Dorsolateral prefrontal cortex (tissue), 120 donors: ENCODE measurements at regions of chr16 and their contacts with region 1.

Region 1: DNA sequence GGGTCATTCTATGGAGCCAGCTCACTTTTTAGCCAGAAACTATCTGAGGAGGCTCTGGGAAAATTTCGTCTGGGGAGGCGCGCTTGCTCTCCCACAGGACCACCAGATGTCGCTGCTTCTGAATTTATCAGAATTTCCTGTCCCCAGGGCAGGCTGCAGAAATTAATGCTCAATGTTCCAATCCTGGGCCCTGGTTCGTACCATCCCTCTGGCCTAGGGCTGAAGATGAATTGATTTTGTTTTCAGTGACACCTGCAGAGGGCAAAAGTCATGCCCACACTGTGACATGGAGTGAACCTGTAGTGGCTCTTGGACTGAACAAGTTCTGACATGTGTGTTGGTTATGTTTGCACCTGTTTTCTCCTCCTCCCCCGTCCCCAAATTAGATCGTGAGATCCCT is 482.6 kb downstream of the NPIPA7 start:
- DNase-seq: peak in 9 of 10 donors; percentile 19 to 73 (median 54)
- H3K4me3 ChIP-seq: no peak overlapping the region
- H3K27ac ChIP-seq: no peak overlapping the region
- H3K27me3 ChIP-seq: peaks cover 0 to 5% (median 0%) of the 10 kb centered on the region in 45 donors
- CTCF ChIP-seq: peak; percentile 69 to 94 (median 84)

Region 2: DNA sequence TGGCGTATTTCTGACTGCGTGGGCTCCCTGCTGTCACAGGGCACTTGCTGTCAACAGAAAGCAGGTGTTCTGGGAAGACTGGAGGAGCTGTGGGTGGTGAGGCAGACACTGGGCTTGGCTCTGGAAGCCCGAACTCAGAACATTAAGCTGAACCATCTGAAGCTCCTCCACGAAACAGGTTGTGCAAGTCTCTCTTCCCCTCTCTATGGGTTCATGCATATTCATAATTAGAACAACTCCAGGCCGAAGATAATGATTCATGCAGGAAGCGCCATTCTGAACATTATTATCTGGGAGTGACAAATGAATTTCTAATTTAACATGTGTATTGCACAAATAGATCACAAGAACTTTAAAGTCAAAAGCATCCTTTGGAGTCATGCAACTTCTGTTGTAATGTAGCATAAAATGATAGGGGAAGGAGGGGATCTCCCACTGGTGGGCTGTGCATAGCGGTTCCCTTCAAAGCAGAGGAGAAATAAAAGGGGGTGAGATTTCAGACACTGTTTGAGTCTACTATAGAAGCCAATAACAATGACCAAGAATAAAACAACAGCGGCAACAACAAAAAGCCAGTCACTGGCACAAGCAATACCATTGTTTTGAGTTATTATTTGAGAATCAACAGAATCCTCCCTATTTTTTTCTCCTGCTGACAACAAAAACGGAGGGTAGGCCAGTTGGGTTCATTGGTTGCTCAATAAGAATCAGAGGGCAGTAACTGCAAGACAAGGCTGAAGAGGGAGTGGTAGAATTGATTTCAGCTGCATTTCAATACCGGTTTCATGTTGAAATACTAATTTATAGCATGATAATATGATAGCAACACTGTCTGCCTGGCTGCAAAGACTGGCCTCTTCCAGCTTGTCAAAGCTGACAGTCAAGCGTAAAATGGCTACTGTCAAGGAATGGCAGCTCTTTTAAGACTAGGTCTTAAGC is 201.9 kb after region 1 on chr16:
- intact Hi-C with region 1: loop called in 1 of 2 experiments (anchors 10 kb)
- DNase-seq: peak in 3 of 10 donors; percentile 41 to 46 (median 45)
- H3K4me3 ChIP-seq: no peak overlapping the region
- H3K27ac ChIP-seq: peak overlapping the region in 50 of 59 donors; percentile 1 to 81 (median 46)
- H3K27me3 ChIP-seq: peaks cover 0 to 5% (median 0%) of the 10 kb centered on the region in 45 donors
- CTCF ChIP-seq: no peak

Region 3: DNA sequence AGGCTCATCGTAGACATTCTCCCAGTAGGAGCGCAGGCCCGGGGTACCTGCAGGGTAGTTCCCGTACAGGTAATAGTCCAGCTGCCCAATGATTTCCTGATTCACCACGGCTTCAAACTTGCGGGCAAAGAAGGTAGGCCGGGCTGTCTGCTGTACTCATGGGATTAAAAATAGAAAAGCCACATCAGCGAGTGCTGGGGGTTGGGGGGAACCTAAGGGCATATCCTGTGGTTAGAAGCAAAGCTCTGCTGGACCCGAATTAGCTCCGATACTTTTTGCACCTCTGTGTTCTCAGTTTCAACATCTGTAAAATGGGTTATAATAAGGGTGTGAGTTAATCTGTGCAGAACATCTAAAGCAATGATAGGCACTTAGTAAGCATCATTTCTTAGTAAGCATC is 273.0 kb after region 1 on chr16:
- intact Hi-C with region 1: loop called in 1 of 2 experiments (anchors 10 kb)
- DNase-seq: no peak
- H3K4me3 ChIP-seq: no peak overlapping the region
- H3K27ac ChIP-seq: no peak overlapping the region
- H3K27me3 ChIP-seq: no peaks in the 10 kb centered on the region
- CTCF ChIP-seq: no peak

Region 4: DNA sequence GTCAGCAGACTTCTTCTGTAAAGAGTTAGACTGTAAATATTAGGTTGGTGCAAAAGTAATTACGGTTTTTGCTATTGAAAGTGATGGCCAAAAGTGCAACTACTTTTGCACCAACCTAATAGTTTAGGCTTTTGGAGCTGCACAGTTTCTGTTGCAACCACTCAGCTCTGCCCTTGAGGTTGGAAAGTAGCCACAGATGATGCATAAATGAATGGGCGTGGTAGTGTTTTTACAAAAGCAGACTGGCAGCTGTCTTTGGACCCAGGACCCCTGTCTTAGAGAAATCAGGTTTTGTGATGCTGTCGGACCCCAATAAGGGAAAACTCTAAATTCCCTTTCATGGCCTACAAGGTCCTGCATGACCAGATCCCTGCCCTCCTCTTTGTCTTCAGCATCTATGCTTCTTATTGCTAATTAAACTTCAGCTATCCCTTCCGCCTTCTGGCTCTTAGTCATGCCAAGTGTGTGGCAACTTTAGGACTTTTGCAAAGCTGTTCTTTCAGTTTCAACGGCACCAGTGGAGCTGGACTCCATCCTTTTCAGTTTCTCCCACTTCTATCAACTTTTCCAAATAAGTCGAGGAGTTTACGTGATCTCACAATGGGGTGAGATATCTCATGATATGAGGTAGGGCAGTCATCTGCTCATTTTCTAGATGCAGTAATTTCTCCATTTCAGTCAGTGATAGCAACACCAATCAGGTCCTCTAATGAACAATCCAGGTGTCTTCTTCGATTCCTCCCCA is 376.9 kb after region 1 on chr16:
- intact Hi-C with region 1: loop called (anchors 5 to 10 kb)
- DNase-seq: no peak
- H3K4me3 ChIP-seq: no peak overlapping the region
- H3K27ac ChIP-seq: no peak overlapping the region
- H3K27me3 ChIP-seq: no peaks in the 10 kb centered on the region
- CTCF ChIP-seq: no peak

Region 5: DNA sequence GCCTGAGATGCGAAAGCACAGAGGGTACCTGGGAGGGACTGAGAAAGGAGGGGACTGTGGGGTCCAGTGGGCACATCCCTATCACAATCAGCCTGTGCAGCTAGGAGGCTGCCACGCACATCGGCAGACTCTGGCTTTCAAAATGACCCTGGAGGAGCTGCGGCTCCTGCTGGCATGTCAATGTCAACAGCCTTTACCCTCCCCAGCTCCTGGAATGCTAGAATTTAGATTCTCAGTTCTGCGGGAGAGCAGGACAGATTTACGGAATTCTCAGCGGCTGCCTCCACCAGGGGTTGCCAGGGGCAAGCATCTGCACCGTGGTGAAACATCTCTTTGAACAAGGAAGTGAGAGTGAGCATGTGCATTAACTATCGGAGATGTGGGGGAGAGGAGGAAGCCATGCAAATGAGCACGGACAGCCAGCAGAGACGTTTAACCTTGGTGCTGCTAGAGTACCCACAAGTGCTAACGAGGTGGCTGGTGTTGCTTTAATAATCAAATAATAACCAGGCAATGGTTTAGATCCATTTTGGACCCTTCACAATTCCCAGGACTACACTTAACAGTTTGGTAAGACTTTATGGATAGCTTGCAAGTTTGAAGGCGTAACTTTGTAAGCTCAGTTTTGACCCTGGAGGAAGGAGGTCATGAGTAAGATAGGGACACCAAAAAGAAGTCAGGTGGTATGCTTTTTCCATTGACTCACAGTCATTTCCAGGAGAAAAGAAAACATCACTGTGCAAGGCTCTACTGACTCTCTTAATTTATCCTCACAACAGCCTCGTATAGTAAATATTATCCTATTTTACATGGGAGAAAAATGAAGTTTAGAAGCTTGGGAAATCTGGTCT is 555.1 kb after region 1 on chr16:
- intact Hi-C with region 1: loop called in 1 of 2 experiments (anchors 10 kb)
- DNase-seq: peak in 3 of 10 donors; percentile 20 to 45 (median 43)
- H3K4me3 ChIP-seq: peak overlapping the region in 43 of 59 donors; percentile 0 to 52 (median 29)
- H3K27ac ChIP-seq: peak overlapping the region in 37 of 59 donors; percentile 6 to 76 (median 55)
- H3K27me3 ChIP-seq: no peaks in the 10 kb centered on the region
- CTCF ChIP-seq: peak in 38 of 56 donors; percentile 11 to 64 (median 41)

Region 6: DNA sequence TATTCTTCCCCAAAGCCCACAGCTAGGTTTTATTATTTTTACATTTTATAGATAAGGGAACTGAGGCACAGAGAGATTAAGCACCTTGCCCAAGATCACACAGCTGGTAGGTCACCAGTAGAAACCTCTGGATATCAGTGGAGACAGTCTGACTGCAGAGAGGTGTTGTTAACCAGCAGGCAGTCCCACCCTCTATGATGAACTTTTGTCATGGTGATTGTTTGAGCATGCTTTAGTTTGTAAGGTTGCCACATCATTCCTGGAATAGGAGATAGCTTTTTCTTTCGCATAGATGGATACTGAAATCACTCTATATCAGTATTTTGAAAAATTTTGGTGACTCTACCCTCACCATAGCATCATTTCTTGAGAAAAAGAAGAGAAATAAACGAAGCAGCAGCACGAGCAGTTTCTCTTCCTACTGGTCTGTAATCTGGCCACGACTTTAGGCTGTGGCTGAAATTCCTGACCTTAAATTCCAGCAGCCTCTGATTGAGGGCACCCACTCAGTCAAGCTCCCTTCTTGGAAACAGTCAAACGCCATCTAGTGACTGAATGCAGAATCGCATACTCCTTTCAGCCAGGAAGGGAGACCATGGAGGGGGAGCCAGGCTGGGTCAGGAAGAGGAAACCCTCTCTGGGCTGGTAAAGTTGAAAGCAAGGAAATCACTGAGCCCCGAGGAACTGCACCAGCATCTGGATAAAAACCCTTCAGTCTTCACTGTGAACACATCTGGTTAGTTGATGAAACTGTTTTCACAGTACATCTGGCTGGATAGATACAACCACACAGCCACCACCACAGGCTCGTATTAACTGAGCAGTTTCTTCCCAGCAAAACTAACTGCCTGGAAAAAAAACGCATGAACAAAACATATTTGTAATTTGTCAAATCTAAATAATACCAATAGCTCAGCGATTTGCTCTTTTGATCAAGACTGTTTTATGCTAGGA is 717.7 kb after region 1 on chr16:
- intact Hi-C with region 1: loop called in 1 of 2 experiments (anchors 5 kb)
- DNase-seq: peak in 4 of 10 donors; percentile 14 to 39 (median 32)
- H3K4me3 ChIP-seq: no peak overlapping the region
- H3K27ac ChIP-seq: no peak overlapping the region
- H3K27me3 ChIP-seq: peaks cover 0 to 10% (median 0%) of the 10 kb centered on the region in 45 donors
- CTCF ChIP-seq: peak; percentile 34 to 87 (median 78)